B cell (primary cell): ENCODE measurements at regions of chr17 and their contacts with region 1.

Region 1: DNA sequence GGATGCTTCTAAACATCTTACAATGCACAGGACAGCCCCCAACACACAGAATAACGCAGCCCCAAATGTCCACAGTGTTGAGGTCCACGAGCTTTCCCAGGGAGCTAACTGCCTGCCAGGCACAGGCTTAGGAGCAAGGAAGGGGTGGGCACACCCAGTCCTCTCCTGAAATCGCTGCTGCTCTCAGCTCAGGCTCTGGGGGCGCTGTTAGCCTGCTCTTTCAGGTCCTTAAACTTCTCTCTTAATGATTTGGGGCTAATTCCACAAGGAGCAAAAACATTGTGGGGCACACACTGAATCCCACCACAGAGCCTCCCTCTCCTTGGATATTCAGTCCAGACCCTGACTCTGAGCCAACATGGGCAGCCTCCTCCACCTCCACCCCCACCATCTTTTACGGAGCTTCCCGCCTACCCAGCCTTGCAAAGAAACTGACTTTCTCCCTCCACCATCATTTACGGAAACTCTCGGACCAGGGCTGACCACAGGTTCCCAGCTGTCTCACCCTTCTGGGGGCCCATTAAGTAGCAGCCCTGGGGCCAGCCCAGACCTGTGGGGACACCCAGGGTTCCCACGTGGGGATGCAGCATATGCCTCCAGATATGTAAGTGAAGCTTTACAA is 1.1 kb downstream of the CD300H start:
- DNase-seq: peak; percentile 59
- ATAC-seq: peak; percentile 39
- H3K4me3 ChIP-seq: no peak overlapping the region
- H3K4me3 Mint-ChIP-seq: no peak overlapping the region
- H3K27ac ChIP-seq: no peak overlapping the region
- H3K27ac Mint-ChIP-seq: no peak overlapping the region
- H3K4me1 ChIP-seq: peaks cover 21 to 28% of the 10 kb centered on the region in 2 donors
- H3K4me1 Mint-ChIP-seq: peaks cover 10% of the 10 kb centered on the region
- H3K27me3 ChIP-seq: peaks cover 0 to 50% (median 6%) of the 10 kb centered on the region in 4 experiments
- H3K27me3 Mint-ChIP-seq: peaks cover 61% of the 10 kb centered on the region
- CTCF ChIP-seq: peak; percentile 64

Region 2: DNA sequence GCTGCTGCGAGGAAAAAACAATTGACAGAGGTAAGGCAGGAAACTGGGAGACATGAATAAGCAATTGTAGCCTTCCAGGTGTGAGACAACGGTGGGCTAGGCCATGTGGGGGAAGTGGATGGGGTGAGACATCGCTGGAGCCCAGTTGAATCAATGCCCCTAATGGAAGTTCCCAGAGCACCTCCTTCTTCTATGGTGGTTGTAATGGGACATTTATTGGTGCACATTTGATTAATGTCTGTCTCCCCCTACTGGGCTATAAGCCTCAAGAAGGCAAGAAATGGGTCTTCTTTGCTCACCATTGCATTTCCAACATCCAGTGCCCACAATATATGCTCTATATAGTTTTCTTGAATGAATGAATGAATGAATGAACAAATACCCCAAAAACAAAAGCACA is 80.0 kb after region 1 on chr17:
- CTCF ChIA-PET with region 1: interaction called, 15 read pairs
- POLR2A ChIA-PET with region 1: interaction called, 3 read pairs
- intact Hi-C with region 1: loop called (anchors 1 kb)
- DNase-seq: peak; percentile 60
- ATAC-seq: peak; percentile 50
- H3K4me3 ChIP-seq: no peak overlapping the region
- H3K4me3 Mint-ChIP-seq: no peak overlapping the region
- H3K27ac ChIP-seq: no peak overlapping the region
- H3K27ac Mint-ChIP-seq: peak overlapping the region; percentile 50
- H3K4me1 ChIP-seq: peaks cover 32 to 37% of the 10 kb centered on the region in 2 donors
- H3K4me1 Mint-ChIP-seq: peaks cover 43% of the 10 kb centered on the region
- H3K27me3 ChIP-seq: peaks cover 0 to 32% (median 12%) of the 10 kb centered on the region in 4 experiments
- H3K27me3 Mint-ChIP-seq: peaks cover 47% of the 10 kb centered on the region
- CTCF ChIP-seq: peak; percentile 56